ENCODE measurements at regions of chr4 and their contacts with region 1.

Region 1: DNA sequence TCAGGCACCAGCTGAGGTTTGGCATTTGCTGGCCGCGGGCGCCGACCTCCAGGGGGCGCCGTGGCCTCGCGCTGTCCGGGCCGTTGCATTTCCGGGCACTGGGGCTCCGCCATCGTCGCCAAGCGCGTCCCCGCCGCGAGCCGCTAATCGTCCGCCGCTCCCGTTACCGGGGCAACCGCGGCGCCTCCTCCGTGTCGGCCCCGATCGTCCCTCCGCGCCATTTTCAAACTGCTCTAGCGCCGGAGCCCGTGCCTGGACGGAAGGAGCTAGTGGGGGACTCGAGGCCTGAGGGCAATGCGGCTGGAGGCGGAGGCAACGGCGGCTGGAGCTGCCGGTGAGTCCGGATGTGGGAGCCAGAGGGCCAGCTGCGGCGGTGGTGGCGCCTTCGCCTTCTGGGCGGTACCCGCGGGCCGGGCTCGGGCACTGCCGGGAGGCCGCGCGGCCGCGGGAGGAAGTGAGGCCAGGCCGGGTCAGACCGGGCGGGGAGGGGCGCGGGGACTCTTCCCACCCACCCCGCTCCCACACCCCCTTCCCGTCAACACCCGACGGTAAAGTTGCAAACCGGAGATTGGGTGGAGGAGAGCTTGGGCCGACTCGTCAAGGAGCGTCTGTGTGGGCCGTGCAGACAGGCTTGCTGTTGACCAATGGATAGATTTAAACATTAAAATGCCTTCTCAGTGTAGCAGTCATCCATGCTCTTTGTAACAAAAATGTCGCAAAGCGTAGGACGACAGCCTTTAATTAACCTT is at the start of gene CEP135:
- DNase-seq: peak; percentile 94
- ATAC-seq: peak; percentile 88
- H3K4me3 Mint-ChIP-seq: peak within 1 kb of the TSS; percentile 89
- H3K27ac Mint-ChIP-seq: peak within 1 kb of the TSS; percentile 94
- H3K4me1 Mint-ChIP-seq: peaks cover 41% of the 10 kb centered on the region
- H3K27me3 Mint-ChIP-seq: no peaks in the 10 kb centered on the region
- total RNA-seq, gene CEP135: 15.7 to 15.8 TPM

Region 2: GRCh38 chr4:56093576-56093975 is 144.7 kb after region 1 on chr4:
- CTCF ChIA-PET with region 1: no interaction called
- DNase-seq: no peak
- ATAC-seq: no peak
- H3K4me3 Mint-ChIP-seq: no peak overlapping the region
- H3K27ac Mint-ChIP-seq: no peak overlapping the region
- H3K4me1 Mint-ChIP-seq: no peaks in the 10 kb centered on the region
- H3K27me3 Mint-ChIP-seq: peaks cover 4% of the 10 kb centered on the region

Region 3: GRCh38 chr4:56301181-56302076 is 352.5 kb after region 1 on chr4:
- CTCF ChIA-PET with region 1: interaction called, 11 read pairs
- DNase-seq: peak; percentile 69
- ATAC-seq: peak; percentile 92
- H3K4me3 Mint-ChIP-seq: no peak overlapping the region
- H3K27ac Mint-ChIP-seq: no peak overlapping the region
- H3K4me1 Mint-ChIP-seq: peaks cover 3% of the 10 kb centered on the region
- H3K27me3 Mint-ChIP-seq: peaks cover 10% of the 10 kb centered on the region

Region 4: GRCh38 chr4:56387023-56388001 is 438.4 kb after region 1 on chr4 and contains the start of gene AASDH:
- CTCF ChIA-PET with region 1: interaction called, 13 read pairs
- DNase-seq: peak; percentile 97
- ATAC-seq: peak; percentile 93
- H3K4me3 Mint-ChIP-seq: peak within 1 kb of the TSS; percentile 99
- H3K27ac Mint-ChIP-seq: peak within 1 kb of the TSS; percentile 100
- H3K4me1 Mint-ChIP-seq: peaks cover 42% of the 10 kb centered on the region
- H3K27me3 Mint-ChIP-seq: no peaks in the 10 kb centered on the region
- total RNA-seq, gene AASDH: 9.4 to 11.8 TPM